CD4-positive, alpha-beta T cell (primary cell): ENCODE measurements at regions of chr15 and their contacts with region 1.

Region 1: GRCh38 chr15:88664151-88664778 is 25.4 kb downstream of the ISG20 start:
- DNase-seq: peak in 11 of 14 experiments; percentile 39 to 82 (median 50)
- ATAC-seq: peak; percentile 93
- H3K4me3 ChIP-seq: no peak overlapping the region
- H3K4me3 Mint-ChIP-seq: no peak overlapping the region
- H3K27ac ChIP-seq: no peak overlapping the region
- H3K27ac Mint-ChIP-seq: peak overlapping the region; percentile 64
- H3K4me1 ChIP-seq: peaks cover 27% of the 10 kb centered on the region
- H3K4me1 Mint-ChIP-seq: peaks cover 53% of the 10 kb centered on the region
- H3K27me3 ChIP-seq: no peaks in the 10 kb centered on the region
- H3K27me3 Mint-ChIP-seq: peaks cover 8% of the 10 kb centered on the region
- CTCF ChIP-seq: peak; percentile 72

Region 2: GRCh38 chr15:88246666-88247446 is 417.4 kb before region 1 on chr15:
- CTCF ChIA-PET with region 1: no interaction called
- POLR2A ChIA-PET with region 1: no interaction called
- intact Hi-C with region 1: loop called in 1 of 2 experiments (anchors 5 kb)
- DNase-seq: peak; percentile 42 to 83 (median 64)
- ATAC-seq: peak; percentile 90
- H3K4me3 ChIP-seq: no peak overlapping the region
- H3K4me3 Mint-ChIP-seq: no peak overlapping the region
- H3K27ac ChIP-seq: no peak overlapping the region
- H3K27ac Mint-ChIP-seq: no peak overlapping the region
- H3K4me1 ChIP-seq: peaks cover 7% of the 10 kb centered on the region
- H3K4me1 Mint-ChIP-seq: peaks cover 8% of the 10 kb centered on the region
- H3K27me3 ChIP-seq: peaks cover 0 to 5% of the 10 kb centered on the region in 2 experiments
- H3K27me3 Mint-ChIP-seq: peaks cover 18% of the 10 kb centered on the region
- CTCF ChIP-seq: peak; percentile 88

Region 3: GRCh38 chr15:88476635-88477060 is 187.6 kb before region 1 on chr15:
- CTCF ChIA-PET with region 1: no interaction called
- POLR2A ChIA-PET with region 1: no interaction called
- intact Hi-C with region 1: loop called (anchors 1 to 2 kb)
- DNase-seq: peak in 5 of 14 experiments; percentile 4 to 53 (median 43)
- ATAC-seq: peak; percentile 52
- H3K4me3 ChIP-seq: no peak overlapping the region
- H3K4me3 Mint-ChIP-seq: no peak overlapping the region
- H3K27ac ChIP-seq: no peak overlapping the region
- H3K27ac Mint-ChIP-seq: no peak overlapping the region
- H3K4me1 ChIP-seq: no peaks in the 10 kb centered on the region
- H3K4me1 Mint-ChIP-seq: peaks cover 6% of the 10 kb centered on the region
- H3K27me3 ChIP-seq: no peaks in the 10 kb centered on the region
- H3K27me3 Mint-ChIP-seq: no peaks in the 10 kb centered on the region
- CTCF ChIP-seq: peak; percentile 47

Region 4: GRCh38 chr15:88546248-88547129 is 117.8 kb before region 1 on chr15 and contains the start of gene DET1:
- CTCF ChIA-PET with region 1: no interaction called
- POLR2A ChIA-PET with region 1: no interaction called
- intact Hi-C with region 1: loop called in 1 of 2 experiments (anchors 10 kb)
- DNase-seq: peak; percentile 90 to 98 (median 94)
- ATAC-seq: peak; percentile 91
- H3K4me3 ChIP-seq: peak within 1 kb of the TSS; percentile 66
- H3K4me3 Mint-ChIP-seq: peak within 1 kb of the TSS; percentile 91
- H3K27ac ChIP-seq: peak within 1 kb of the TSS; percentile 64 to 74
- H3K27ac Mint-ChIP-seq: peak within 1 kb of the TSS; percentile 95
- H3K4me1 ChIP-seq: peaks cover 10% of the 10 kb centered on the region
- H3K4me1 Mint-ChIP-seq: peaks cover 19% of the 10 kb centered on the region
- H3K27me3 ChIP-seq: no peaks in the 10 kb centered on the region
- H3K27me3 Mint-ChIP-seq: no peaks in the 10 kb centered on the region
- CTCF ChIP-seq: peak; percentile 74
- total RNA-seq, gene DET1: 2.2 to 2.8 TPM

Region 5: GRCh38 chr15:88638626-88639372 is 25.5 kb before region 1 on chr15 and contains the start of gene ISG20:
- CTCF ChIA-PET with region 1: interaction called, 12 read pairs
- POLR2A ChIA-PET with region 1: interaction called, 19 read pairs
- intact Hi-C with region 1: loop called in 1 of 2 experiments (anchors 1 kb)
- DNase-seq: peak; percentile 93 to 100 (median 96)
- ATAC-seq: peak; percentile 77
- H3K4me3 ChIP-seq: peak within 1 kb of the TSS; percentile 76
- H3K4me3 Mint-ChIP-seq: peak within 1 kb of the TSS; percentile 92
- H3K27ac ChIP-seq: peak within 1 kb of the TSS; percentile 99 to 100
- H3K27ac Mint-ChIP-seq: peak within 1 kb of the TSS; percentile 95
- H3K4me1 ChIP-seq: peaks cover 96% of the 10 kb centered on the region
- H3K4me1 Mint-ChIP-seq: peaks cover 77% of the 10 kb centered on the region
- H3K27me3 ChIP-seq: no peaks in the 10 kb centered on the region
- H3K27me3 Mint-ChIP-seq: no peaks in the 10 kb centered on the region
- CTCF ChIP-seq: peak; percentile 65
- total RNA-seq, gene ISG20: 152 to 157 TPM

Region 6: GRCh38 chr15:88649286-88649733 is 15.0 kb before region 1 on chr15:
- CTCF ChIA-PET with region 1: no interaction called
- POLR2A ChIA-PET with region 1: interaction called, 8 read pairs
- intact Hi-C with region 1: loop called in 1 of 2 experiments (anchors 2 kb)
- DNase-seq: peak; percentile 35 to 87 (median 64)
- ATAC-seq: peak; percentile 89
- H3K4me3 ChIP-seq: peak overlapping the region; percentile 19
- H3K4me3 Mint-ChIP-seq: peak overlapping the region; percentile 82
- H3K27ac ChIP-seq: peak overlapping the region; percentile 67 to 70
- H3K27ac Mint-ChIP-seq: peak overlapping the region; percentile 95
- H3K4me1 ChIP-seq: peaks cover 97% of the 10 kb centered on the region
- H3K4me1 Mint-ChIP-seq: peaks cover 84% of the 10 kb centered on the region
- H3K27me3 ChIP-seq: no peaks in the 10 kb centered on the region
- H3K27me3 Mint-ChIP-seq: no peaks in the 10 kb centered on the region
- CTCF ChIP-seq: no peak

Region 7: DNA sequence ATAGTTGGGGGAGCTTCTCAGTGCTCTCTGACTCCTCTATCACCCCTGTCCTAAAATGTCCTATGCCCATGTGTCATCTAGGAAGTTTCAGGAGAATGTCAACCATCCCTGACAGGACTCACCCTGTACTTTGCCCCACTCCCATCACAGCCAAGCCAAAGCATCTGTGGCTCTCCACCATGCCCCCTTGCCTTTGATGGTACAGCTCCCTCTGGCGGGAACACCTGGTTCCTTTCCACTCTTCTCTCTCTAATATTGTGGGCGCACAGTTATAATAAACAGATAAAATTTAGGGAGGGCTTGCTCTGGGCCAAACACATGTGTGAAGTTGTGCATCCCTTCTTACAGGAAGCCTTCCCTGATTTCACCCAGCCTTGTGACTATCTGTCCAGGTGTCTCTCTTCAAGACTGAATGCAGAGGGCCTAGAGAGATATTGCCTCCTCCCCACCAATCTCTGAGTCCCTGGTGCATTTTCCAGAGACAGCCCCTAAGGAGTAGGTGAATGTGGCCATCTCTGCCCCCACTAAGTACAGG is 37.4 kb after region 1 on chr15:
- CTCF ChIA-PET with region 1: no interaction called
- POLR2A ChIA-PET with region 1: no interaction called
- intact Hi-C with region 1: no loop called
- DNase-seq: peak in 8 of 14 experiments; percentile 7 to 45 (median 17)
- ATAC-seq: no peak
- H3K4me3 ChIP-seq: no peak overlapping the region
- H3K4me3 Mint-ChIP-seq: no peak overlapping the region
- H3K27ac ChIP-seq: no peak overlapping the region
- H3K27ac Mint-ChIP-seq: no peak overlapping the region
- H3K4me1 ChIP-seq: peaks cover 12% of the 10 kb centered on the region
- H3K4me1 Mint-ChIP-seq: peaks cover 13% of the 10 kb centered on the region
- H3K27me3 ChIP-seq: peaks cover 10 to 11% of the 10 kb centered on the region in 2 experiments
- H3K27me3 Mint-ChIP-seq: peaks cover 23% of the 10 kb centered on the region
- CTCF ChIP-seq: no peak